ENCODE measurements at regions of chr6 and their contacts with region 1.

Region 1: DNA sequence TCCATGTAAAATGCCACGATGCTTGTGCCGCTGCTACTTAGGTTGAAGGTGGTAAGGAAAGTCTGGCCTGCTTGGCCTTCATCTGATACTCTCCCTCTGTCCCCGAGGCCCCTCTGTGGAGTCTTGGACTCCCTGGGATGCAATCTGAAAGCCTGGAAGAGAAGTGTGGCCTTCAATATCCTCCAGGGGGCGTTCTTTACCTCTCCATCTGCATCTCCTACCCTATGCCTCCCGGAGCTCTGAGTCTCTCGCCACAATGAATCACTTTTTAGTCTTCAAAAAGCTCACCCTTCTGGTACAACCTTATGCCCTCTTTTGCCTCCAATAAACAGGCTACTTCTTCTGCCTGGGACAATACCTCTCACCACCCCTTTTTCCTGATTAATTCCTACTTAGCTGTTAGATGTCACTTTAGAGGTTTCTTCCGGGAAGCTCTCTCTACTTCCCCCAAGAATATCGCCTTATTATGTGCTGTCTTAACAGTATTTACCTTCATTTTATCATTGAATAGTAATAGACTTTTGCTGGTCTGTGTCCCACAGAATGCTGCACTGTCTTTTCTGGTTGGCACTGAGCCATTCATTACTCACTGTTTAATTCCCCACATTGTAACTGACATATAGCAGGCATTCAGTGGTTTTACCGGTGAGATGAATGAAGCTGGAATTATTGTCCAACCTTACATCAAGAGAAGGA is 13.9 kb upstream of the ATG5 start:
- DNase-seq: peak; percentile 57
- H3K4me3 Mint-ChIP-seq: no peak overlapping the region
- H3K27ac Mint-ChIP-seq: no peak overlapping the region
- H3K4me1 Mint-ChIP-seq: peaks cover 2% of the 10 kb centered on the region
- H3K27me3 Mint-ChIP-seq: peaks cover 30% of the 10 kb centered on the region

Region 2: DNA sequence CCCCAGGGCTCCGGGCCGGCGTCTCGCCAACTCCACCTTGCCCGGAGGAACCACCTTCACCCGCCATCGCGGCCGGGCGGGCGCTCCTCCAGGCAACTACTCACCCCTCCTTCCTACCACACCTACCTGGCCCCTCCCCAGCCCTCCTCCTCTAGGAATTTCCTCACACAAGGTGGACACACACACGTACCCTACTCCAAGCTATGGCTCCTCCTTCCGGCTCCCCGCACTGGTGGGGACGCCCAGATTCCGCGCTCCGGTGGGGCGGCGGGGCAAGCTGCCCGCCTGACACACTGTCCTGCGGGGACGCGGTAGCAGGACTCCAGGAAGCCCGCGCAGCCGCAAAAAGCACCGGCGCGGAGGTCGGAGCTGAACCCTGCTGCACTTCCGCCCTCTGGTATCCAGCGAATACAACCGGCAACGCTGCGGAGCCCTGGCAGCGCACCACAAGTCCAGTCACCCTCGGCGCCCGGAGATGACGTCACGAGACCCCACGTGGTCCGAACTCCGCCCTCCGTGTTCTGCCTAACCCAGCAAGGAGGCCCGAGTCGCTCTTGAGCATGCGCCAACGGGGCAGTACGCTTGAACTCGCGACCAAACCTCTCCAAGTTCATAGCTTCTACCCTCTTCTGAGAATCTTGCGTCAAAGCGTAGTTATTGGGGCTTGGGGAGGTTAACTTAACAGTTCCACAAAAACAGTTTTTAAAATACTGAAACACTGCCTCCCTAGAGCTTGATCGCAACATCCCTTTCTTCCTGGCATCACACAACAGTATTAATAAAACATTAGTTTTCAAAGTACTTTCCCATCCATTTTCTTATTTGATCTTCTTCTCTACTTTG is 13.9 kb before region 1 on chr6 and contains the start of gene ATG5:
- CTCF ChIA-PET with region 1: interaction called, 13 read pairs
- DNase-seq: peak; percentile 100
- H3K4me3 Mint-ChIP-seq: peak within 1 kb of the TSS; percentile 98
- H3K27ac Mint-ChIP-seq: peak within 1 kb of the TSS; percentile 97
- H3K4me1 Mint-ChIP-seq: peaks cover 40% of the 10 kb centered on the region
- H3K27me3 Mint-ChIP-seq: peaks cover 21% of the 10 kb centered on the region

Region 3: DNA sequence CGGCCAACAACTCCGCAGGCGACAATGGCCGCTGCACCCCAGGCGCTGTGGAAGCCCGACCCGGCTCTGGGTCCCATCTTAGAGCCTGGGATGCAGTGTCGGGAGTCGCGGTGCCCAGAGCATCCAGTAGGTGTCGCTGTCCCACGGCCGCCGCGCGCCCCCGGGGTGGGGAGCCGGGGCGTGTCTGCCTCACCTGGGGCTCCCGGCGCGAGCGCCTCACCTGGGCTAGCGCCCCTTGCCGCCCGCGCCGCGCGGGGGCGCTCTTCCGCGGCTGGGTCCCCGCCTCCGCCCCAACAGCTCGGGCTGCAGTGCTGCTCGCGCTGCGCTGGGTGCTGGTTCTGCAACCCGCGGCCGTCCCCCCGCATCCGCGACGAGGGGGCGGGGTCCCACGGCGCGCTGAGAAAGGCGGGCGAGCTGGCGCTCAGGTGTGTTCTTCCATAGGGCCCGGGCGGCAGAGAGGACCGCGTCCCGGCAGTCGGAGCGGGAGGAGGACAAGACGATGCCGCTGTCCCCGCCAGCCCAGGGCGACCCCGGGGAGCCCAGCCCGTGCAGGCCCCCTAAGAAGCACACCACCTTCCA is 21.0 kb after region 1 on chr6 and contains the start of gene CRYBG1:
- CTCF ChIA-PET with region 1: interaction called, 12 read pairs
- DNase-seq: peak; percentile 71
- H3K4me3 Mint-ChIP-seq: peak within 1 kb of the TSS; percentile 59
- H3K27ac Mint-ChIP-seq: no peak within 1 kb of the TSS
- H3K4me1 Mint-ChIP-seq: peaks cover 9% of the 10 kb centered on the region
- H3K27me3 Mint-ChIP-seq: peaks cover 61% of the 10 kb centered on the region

Region 4: DNA sequence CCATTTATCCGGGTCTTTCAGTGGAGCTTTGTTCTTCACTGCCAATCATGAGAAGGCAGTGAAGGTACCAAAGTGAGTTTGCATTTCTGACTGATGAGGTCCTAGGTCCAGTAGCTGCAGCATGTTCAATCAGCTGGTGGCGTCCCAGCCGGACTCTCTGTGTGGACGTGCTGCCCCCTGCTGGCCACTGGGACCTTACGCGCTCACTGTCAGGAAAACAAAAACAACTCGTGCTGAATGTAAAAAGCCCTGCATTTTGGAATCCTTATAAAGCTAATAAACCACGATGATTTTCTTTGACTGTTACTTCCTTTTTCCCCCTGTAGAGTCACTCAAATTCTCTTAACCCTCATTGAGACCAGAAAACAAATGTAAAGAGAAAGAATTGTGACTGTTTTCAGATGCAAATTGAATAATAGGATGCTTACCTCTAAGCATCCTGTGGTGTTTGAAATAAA is 640.0 kb after region 1 on chr6:
- CTCF ChIA-PET with region 1: interaction called, 12 read pairs
- DNase-seq: peak; percentile 86
- H3K4me3 Mint-ChIP-seq: no peak overlapping the region
- H3K27ac Mint-ChIP-seq: no peak overlapping the region
- H3K4me1 Mint-ChIP-seq: peaks cover 4% of the 10 kb centered on the region
- H3K27me3 Mint-ChIP-seq: peaks cover 48% of the 10 kb centered on the region